Spleen (tissue), 13 donors: ENCODE measurements at regions of chr6 and their contacts with region 1.

Region 1: DNA sequence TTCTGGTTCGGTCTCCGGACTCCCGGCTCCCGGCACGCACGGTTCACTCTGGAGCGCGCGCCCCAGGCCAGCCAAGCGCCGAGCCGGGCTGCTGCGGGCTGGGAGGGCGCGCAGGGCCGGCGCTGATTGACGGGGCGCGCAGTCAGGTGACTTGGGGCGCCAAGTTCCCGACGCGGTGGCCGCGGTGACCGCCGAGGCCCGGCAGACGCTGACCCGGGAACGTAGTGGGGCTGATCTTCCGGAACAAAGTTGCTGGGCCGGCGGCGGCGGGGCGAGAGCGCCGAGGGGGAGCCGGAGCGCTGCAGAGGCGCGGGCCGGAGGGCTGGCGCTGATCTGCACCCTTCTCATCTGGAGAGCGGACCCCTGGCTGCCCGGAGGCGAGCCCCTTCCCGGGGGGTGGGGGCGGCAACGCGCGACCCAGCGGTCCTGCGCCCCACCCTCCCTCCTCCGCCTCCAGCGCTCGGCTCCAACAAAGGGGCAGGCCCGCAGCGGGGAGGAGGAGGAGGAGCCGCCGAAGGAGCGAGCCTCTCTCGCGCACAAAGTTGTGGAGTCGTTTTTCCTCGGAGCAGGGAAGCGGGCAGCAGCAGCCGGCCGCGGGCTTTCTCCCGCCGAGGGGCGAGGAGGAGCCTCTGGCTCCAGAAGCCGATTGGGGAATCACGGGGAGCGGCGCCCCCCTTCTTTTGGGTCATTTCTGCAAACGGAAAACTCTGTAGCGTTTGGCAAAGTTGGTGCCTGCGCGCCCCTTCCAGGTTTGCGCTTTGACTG is at the start of gene UTRN:
- DNase-seq: peak; percentile 92
- H3K4me3 ChIP-seq: peak within 1 kb of the TSS; percentile 76 to 97 (median 91)
- H3K27ac ChIP-seq: peak within 1 kb of the TSS; percentile 81 to 97 (median 94)
- H3K4me1 ChIP-seq: peaks cover 7 to 40% (median 22%) of the 10 kb centered on the region in 6 donors
- H3K27me3 ChIP-seq: no peaks in the 10 kb centered on the region
- CTCF ChIP-seq: peak in 1 of 11 experiments; percentile 26
- POLR2A ChIP-seq: peak in 1 of 3 donors; percentile 50
- total RNA-seq, gene UTRN: 273 to 539 (median 391) TPM

Region 2: DNA sequence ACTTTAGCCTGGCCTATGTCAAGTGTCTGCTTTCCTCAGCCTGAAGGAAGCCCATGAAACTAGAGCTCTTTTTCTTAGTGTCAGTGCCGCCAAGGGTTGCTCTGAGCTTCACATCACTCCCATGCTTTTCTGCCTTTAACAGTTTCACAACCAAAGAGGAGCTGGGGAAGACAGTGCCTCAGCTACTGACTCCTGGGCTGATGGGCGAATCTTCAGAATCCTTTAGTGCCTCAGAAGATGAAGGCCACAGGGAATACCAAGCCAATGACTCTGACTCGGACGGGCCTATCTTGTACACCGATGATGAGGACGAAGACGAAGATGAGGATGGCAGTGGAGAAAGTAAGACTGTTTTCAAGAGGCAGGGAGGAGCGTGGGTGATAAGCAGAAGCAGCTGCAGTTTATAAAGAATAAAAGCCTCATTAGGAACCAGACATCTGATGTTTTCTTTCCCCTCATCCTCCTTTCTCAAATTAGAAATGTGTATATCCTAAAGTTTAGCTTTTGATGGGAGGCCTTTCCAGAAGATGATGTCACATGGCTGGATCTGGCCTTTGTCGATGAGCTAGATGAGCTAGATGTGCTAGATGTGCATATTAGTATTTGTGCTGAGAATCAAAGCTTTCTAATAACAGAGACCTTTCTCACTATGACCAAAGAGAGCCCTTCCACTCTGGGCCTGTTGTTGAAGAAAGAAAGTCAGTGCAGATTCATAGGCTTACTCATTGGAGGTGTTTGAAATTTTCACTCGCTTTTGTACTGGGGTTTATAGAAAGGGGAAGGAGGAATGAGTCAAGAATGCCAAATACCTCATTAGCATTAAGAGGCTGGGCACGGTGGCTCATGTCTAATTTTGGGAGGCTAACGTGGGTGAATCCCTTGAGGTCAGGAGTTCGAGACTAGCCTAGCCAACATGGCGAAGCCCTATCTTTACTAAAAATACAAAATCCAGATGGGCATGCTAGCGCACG is 512.6 kb before region 1 on chr6:
- intact Hi-C with region 1: no loop called
- DNase-seq: no peak
- H3K4me3 ChIP-seq: no peak overlapping the region
- H3K27ac ChIP-seq: peak overlapping the region in 5 of 8 donors; percentile 6 to 29 (median 16)
- H3K4me1 ChIP-seq: peaks cover 0 to 14% (median 0%) of the 10 kb centered on the region in 6 donors
- H3K27me3 ChIP-seq: no peaks in the 10 kb centered on the region
- CTCF ChIP-seq: no peak
- POLR2A ChIP-seq: no peak

Region 3: GRCh38 chr6:144104898-144105487 is 180.0 kb before region 1 on chr6:
- intact Hi-C with region 1: loop called (anchors 5 kb)
- DNase-seq: no peak
- H3K4me3 ChIP-seq: no peak overlapping the region
- H3K27ac ChIP-seq: no peak overlapping the region
- H3K4me1 ChIP-seq: peaks cover 0 to 8% (median 0%) of the 10 kb centered on the region in 6 donors
- H3K27me3 ChIP-seq: no peaks in the 10 kb centered on the region
- CTCF ChIP-seq: peak; percentile 35 to 83 (median 69)
- POLR2A ChIP-seq: no peak

Region 4: DNA sequence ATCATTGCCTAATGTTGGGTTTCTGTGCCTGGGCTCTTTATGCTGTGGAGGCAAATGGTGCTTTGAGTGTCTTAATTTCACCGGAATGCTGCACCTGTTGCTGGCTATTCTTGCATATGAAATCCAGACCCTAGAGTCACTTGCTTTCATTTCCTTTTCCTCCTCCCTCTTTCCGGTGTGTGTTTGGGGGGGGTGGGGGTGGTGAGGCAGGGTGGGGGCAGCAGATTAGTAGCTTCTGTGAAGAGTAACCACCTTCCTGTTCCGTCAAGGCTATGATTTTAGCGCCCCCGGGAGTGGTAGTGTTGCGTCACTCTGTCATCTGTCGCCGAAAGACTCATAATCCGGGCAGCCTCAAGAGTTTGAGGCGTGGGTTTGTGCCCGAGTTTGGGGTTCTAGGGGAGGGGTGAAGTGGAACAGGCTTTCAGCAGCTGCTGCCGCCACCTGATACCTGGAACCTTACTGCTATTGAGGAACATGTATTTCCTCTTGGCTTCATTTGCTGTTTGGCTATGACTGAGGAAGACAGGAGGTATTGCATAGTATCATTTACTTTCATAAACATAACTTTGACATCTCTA is 49.3 kb after region 1 on chr6:
- intact Hi-C with region 1: loop called (anchors 10 kb)
- DNase-seq: peak; percentile 90
- H3K4me3 ChIP-seq: peak overlapping the region in 5 of 8 donors; percentile 1 to 59 (median 14)
- H3K27ac ChIP-seq: peak overlapping the region; percentile 61 to 89 (median 80)
- H3K4me1 ChIP-seq: peaks cover 28 to 93% (median 69%) of the 10 kb centered on the region in 6 donors
- H3K27me3 ChIP-seq: no peaks in the 10 kb centered on the region
- CTCF ChIP-seq: no peak
- POLR2A ChIP-seq: no peak